Calu3 (cell line): ENCODE measurements at regions of chr5 and their contacts with region 1.

Region 1: GRCh38 chr5:42908509-42909488 is 97.1 kb upstream of the SELENOP start:
- DNase-seq: peak; percentile 88
- H3K4me3 Mint-ChIP-seq: peak overlapping the region; percentile 83
- H3K27ac Mint-ChIP-seq: peak overlapping the region; percentile 79
- H3K4me1 Mint-ChIP-seq: peaks cover 6% of the 10 kb centered on the region
- H3K27me3 Mint-ChIP-seq: no peaks in the 10 kb centered on the region
- CTCF ChIP-seq: peak; percentile 85

Region 2: DNA sequence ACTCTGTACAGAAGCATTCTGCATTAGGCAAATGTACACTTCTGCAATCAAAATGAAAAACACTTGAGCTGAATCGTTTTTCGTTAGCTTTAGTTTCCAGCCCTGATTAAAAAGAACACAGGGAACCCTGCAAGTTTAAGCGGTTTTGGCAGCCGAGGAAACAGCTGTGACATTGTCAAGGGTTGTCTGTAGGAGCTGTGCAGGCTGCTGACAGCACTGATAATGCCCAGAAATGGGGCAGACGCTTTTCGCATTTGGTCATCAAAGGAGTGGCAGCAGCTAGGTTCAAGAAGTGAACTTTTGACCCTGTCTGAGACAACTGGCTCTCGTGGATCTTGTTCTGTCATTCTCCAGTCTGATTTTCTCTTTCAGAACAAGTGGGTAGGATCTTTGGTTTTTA is 317.8 kb before region 1 on chr5:
- CTCF ChIA-PET with region 1: no interaction called
- intact Hi-C with region 1: no loop called
- DNase-seq: no peak
- H3K4me3 Mint-ChIP-seq: no peak overlapping the region
- H3K27ac Mint-ChIP-seq: no peak overlapping the region
- H3K4me1 Mint-ChIP-seq: no peaks in the 10 kb centered on the region
- H3K27me3 Mint-ChIP-seq: peaks cover 65% of the 10 kb centered on the region
- CTCF ChIP-seq: no peak

Region 3: DNA sequence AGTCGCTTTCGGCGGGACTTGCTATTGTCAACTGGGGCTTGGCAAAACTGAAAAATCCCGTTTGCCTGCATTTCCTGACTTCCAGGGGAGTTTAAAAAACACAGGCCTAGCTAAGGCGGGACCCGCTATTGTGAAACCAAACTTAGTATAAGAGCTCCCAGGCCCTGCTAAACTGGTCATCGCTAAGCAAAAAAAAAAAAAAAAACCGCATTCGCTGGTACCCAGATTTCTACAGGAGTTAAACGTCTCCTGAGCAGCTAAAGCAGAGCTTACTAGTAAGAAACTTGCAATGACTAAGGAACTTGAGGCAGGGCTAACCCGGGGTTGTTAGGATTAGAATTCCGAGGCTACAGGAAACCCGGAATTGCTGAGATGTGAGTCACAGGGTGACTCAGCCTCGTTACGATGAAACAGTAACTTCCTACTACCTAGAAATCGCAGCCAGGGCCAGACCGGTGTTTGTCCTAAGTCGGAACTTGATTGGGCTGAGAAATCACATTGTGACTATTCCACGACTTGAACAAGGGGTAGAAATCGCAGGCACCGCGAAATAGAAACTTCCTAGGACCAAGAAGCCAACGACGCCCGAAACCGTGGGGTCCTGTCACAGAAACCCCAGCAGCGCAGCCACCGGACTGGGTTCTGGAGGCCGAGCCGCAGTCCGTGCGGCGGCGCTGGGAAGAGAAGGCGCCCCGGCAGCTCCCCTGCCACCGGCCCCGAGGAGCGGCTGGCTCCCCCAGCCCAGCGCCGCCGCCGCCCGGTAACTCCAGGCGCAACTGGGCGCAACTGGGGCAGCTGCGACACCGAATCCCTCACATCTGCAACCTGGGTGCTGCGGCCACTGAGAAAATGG is 41.9 kb after region 1 on chr5:
- CTCF ChIA-PET with region 1: interaction called, 3 read pairs
- intact Hi-C with region 1: loop called (anchors 5 kb)
- DNase-seq: peak; percentile 84
- H3K4me3 Mint-ChIP-seq: peak overlapping the region; percentile 44
- H3K27ac Mint-ChIP-seq: peak overlapping the region; percentile 84
- H3K4me1 Mint-ChIP-seq: peaks cover under 1% of the 10 kb centered on the region
- H3K27me3 Mint-ChIP-seq: no peaks in the 10 kb centered on the region
- CTCF ChIP-seq: no peak

Region 4: GRCh38 chr5:42962124-42962523 is 53.3 kb after region 1 on chr5:
- CTCF ChIA-PET with region 1: no interaction called
- intact Hi-C with region 1: no loop called
- DNase-seq: no peak
- H3K4me3 Mint-ChIP-seq: no peak overlapping the region
- H3K27ac Mint-ChIP-seq: no peak overlapping the region
- H3K4me1 Mint-ChIP-seq: peaks cover 9% of the 10 kb centered on the region
- H3K27me3 Mint-ChIP-seq: no peaks in the 10 kb centered on the region
- CTCF ChIP-seq: no peak

Region 5: DNA sequence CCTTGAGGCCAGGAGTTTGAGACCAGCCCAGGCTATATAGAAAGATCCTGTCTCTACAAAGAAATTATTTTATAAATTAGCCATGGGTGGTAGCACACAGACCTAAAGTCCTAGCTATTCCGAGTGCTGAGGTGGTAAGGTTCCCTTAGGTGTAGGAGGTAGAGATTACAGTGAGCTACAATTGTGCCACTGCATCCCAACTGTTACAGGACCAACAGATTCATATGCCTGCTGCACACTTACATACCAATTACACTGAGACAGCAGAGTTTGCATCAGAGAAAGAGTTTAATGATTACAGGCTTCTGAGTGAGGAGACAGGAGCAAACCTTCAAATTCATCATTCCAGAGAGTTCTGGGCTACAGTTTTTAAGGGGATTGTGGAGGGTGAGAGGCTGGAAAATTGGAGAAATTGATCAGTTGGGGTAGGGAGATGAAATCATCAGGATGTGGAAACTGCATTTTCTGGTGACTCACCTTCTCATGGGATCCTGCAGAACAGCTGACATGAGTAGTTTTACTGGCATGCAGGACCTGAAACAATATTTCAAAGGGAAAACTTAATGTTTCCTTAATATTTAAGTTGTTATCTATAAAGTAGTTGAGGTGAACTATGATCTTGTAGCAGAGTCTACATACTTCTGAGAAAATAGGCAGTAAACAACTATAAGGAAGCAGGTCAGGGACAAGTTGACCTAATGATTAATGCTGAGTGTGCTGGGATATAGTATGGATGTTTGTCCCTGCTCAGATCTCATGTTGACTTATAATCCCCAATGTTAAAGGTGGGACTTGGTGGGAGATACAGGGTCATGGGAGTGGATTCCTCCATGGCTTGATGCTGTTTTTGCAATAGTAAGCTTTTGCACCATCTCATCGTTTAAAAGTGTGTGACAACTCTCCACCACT is 76.6 kb after region 1 on chr5:
- CTCF ChIA-PET with region 1: interaction called, 8 read pairs
- intact Hi-C with region 1: loop called (anchors 2 kb)
- DNase-seq: peak; percentile 38
- H3K4me3 Mint-ChIP-seq: peak overlapping the region; percentile 95
- H3K27ac Mint-ChIP-seq: peak overlapping the region; percentile 99
- H3K4me1 Mint-ChIP-seq: peaks cover 63% of the 10 kb centered on the region
- H3K27me3 Mint-ChIP-seq: no peaks in the 10 kb centered on the region
- CTCF ChIP-seq: no peak

Region 6: GRCh38 chr5:43019614-43020293 is 111.0 kb after region 1 on chr5:
- CTCF ChIA-PET with region 1: interaction called, 17 read pairs
- intact Hi-C with region 1: no loop called
- DNase-seq: peak; percentile 79
- H3K4me3 Mint-ChIP-seq: peak overlapping the region; percentile 78
- H3K27ac Mint-ChIP-seq: peak overlapping the region; percentile 70
- H3K4me1 Mint-ChIP-seq: peaks cover 23% of the 10 kb centered on the region
- H3K27me3 Mint-ChIP-seq: no peaks in the 10 kb centered on the region
- CTCF ChIP-seq: no peak

Region 7: DNA sequence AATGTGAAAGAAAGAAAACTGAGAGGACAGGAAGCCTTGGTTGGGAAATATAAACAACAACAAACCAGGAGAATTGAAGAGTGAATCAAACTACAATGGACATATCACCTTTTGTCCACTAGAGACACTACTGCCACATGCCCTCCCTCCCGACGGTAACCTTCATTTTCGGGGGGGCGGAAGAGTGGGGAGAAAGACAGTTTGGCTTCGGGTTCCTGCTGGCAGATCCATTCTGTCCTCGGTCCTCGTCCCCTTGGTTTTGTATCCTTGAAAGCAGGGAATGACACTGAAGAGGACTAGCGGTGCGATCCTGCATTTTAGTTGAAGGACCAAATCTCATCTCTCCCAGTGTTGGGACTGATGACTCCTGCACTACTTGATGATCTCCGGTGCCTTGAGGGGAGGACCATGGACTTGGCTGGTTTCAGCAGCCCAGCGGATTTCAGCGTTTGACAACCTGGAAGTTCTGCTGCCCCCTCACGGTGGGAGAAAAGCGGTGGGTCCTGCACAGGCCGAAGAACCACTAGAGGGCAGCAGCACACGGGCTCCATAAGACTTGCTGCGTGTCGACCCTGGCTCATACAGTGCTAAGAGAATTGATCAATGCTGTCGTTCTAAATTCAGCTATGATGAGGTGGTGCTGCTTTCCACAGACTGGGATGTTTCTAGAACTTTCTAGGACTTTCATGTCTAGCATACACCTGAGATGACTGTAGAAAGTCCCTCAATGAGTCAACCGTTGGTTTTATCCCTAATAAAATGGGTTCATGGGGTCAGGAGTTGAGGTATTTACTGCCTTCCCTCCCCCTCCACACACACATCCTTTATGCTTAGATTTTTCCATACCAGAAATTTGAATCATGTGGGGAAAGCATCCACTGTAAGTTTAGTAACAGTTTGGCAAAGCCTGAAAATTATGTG is 196.8 kb after region 1 on chr5:
- CTCF ChIA-PET with region 1: interaction called, 5 read pairs
- intact Hi-C with region 1: loop called (anchors 1 kb)
- DNase-seq: peak; percentile 92
- H3K4me3 Mint-ChIP-seq: peak overlapping the region; percentile 67
- H3K27ac Mint-ChIP-seq: peak overlapping the region; percentile 21
- H3K4me1 Mint-ChIP-seq: no peaks in the 10 kb centered on the region
- H3K27me3 Mint-ChIP-seq: no peaks in the 10 kb centered on the region
- CTCF ChIP-seq: peak; percentile 99